MCF 10A (cell line): ENCODE measurements at regions of chr11 and their contacts with region 1.

Region 1: GRCh38 chr11:128522055-128522942 is 65.1 kb downstream of the ETS1 start:
- DNase-seq: peak; percentile 96
- H3K4me3 Mint-ChIP-seq: peak overlapping the region; percentile 78
- H3K27ac Mint-ChIP-seq: peak overlapping the region; percentile 79
- H3K4me1 Mint-ChIP-seq: peaks cover 54% of the 10 kb centered on the region
- H3K27me3 Mint-ChIP-seq: no peaks in the 10 kb centered on the region
- CTCF ChIP-seq: no peak

Region 2: DNA sequence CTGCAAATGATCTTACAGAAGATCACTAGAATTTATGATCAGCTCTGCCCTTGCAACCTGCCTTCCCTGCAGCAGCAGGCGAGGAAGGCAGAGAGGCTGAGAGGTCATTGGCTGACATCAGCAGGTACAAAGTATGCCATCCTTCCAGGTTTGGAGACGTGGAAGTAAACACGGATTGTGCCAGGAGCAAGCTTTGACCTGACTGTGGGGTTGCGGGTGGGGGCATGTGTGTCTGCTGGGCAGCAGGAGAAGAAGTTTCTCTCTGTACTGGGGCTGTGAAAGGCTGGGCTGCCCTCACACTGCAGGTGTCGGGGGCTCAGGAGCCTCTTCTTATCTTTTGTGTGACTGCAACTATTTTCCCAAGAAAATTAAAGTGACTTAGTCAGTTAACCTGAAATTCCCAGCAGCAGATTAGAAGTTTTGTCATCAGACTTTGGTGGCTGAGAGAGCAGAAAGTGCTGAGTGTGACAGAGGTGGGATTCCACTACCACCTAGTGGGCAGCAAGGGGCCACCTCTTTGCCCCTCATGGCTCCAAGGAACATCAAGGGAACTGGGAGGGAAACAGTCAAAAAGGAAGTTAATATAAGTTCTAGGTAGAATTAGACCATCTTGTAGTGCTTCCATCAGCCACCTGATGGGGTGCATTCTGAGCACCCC is 500.8 kb before region 1 on chr11:
- CTCF ChIA-PET with region 1: no interaction called
- POLR2A ChIA-PET with region 1: no interaction called
- intact Hi-C with region 1: loop called (anchors 10 kb)
- DNase-seq: peak; percentile 28
- H3K4me3 Mint-ChIP-seq: no peak overlapping the region
- H3K27ac Mint-ChIP-seq: no peak overlapping the region
- H3K4me1 Mint-ChIP-seq: peaks cover 8% of the 10 kb centered on the region
- H3K27me3 Mint-ChIP-seq: no peaks in the 10 kb centered on the region
- CTCF ChIP-seq: peak; percentile 39

Region 3: GRCh38 chr11:128210148-128210940 is 312.0 kb before region 1 on chr11:
- CTCF ChIA-PET with region 1: no interaction called
- POLR2A ChIA-PET with region 1: interaction called, 13 read pairs
- intact Hi-C with region 1: loop called (anchors 5 kb)
- DNase-seq: peak; percentile 100
- H3K4me3 Mint-ChIP-seq: peak overlapping the region; percentile 43
- H3K27ac Mint-ChIP-seq: peak overlapping the region; percentile 86
- H3K4me1 Mint-ChIP-seq: peaks cover 34% of the 10 kb centered on the region
- H3K27me3 Mint-ChIP-seq: no peaks in the 10 kb centered on the region
- CTCF ChIP-seq: no peak

Region 4: DNA sequence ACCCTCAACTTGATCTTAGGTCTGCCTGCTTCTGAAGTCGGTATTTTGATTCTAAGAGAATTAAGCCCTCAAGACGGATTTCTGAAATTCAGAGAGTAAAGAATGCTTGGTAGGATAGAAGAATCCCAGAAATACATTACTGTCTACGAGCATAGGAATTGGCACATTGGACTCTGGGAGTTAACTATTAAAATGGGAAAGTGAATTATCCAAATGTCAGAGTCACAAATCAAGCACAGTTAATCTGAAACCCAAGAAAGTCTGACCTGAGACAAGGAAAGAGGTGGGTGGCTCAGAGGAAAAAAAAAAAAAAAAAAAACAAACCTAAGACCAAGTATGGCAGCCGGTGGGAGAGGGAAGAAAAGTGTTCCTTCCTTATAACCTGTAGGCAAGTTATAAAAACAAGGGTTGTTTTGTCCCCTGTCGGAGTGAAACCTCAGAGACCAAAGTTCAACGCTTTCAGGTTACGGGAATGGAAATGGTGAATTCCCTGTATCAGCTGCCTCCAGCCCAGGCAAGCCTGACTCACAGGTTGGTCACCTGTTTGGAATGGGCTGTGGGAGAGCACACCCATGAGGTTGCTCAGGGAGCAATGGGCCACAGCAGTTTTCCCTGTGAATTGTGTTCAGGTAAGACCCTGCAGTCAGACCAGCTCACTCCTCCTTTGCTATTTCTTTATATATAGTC is 74.0 kb before region 1 on chr11:
- CTCF ChIA-PET with region 1: interaction called, 3 read pairs
- POLR2A ChIA-PET with region 1: no interaction called
- intact Hi-C with region 1: loop called (anchors 5 kb)
- DNase-seq: peak; percentile 87
- H3K4me3 Mint-ChIP-seq: peak overlapping the region; percentile 61
- H3K27ac Mint-ChIP-seq: peak overlapping the region; percentile 88
- H3K4me1 Mint-ChIP-seq: peaks cover 22% of the 10 kb centered on the region
- H3K27me3 Mint-ChIP-seq: no peaks in the 10 kb centered on the region
- CTCF ChIP-seq: peak; percentile 10

Region 5: DNA sequence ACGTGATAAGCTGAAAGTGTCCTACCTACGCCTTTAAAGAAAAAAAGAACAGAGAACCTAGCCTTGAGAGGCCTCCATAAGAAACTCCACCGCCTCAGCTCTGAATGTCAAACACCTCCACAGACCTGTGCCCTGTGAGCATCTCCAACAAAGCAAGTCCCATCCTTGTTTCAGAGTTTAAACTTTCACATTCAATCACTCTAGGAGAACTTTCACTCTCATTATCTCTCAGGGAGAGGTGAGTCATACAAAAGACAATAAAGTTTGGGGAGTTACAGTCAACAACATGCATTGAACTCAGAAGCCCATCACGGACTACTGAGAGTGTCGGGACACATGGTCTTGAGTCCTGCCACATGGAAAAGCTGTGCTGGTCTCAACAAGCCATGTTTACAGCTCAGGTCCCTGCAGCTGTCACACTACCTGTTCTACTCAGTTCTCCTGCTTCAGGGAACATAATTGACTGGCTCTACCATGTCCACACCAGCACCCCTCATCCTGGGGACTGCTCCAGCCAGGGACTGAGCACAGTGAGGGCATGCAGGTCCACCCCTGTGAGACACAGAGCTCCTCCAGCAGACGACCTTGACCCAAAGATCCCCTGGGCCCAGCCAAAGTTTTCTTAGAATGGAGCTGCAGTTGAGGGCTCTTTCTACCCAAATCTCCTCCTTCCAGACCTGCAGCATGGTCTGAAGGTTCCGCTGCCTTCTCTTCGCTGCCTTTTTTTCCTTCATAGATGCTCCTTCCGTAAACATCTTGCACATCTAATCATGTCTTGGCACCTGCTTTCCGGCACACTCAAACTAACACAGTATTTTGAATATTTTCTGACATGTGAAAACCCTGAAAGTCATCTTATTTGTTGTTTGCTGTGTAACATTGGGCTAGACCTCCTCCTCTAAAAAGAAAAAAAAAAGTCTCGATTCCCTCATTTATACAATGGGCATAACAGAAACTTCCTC is 49.9 kb before region 1 on chr11:
- CTCF ChIA-PET with region 1: no interaction called
- POLR2A ChIA-PET with region 1: no interaction called
- intact Hi-C with region 1: no loop called
- DNase-seq: peak; percentile 46
- H3K4me3 Mint-ChIP-seq: no peak overlapping the region
- H3K27ac Mint-ChIP-seq: no peak overlapping the region
- H3K4me1 Mint-ChIP-seq: peaks cover 41% of the 10 kb centered on the region
- H3K27me3 Mint-ChIP-seq: no peaks in the 10 kb centered on the region
- CTCF ChIP-seq: no peak

Region 6: GRCh38 chr11:128497061-128497775 is 25.1 kb before region 1 on chr11:
- CTCF ChIA-PET with region 1: interaction called, 3 read pairs
- POLR2A ChIA-PET with region 1: interaction called, 124 read pairs
- intact Hi-C with region 1: loop called (anchors 2 kb)
- DNase-seq: peak; percentile 94
- H3K4me3 Mint-ChIP-seq: peak overlapping the region; percentile 75
- H3K27ac Mint-ChIP-seq: peak overlapping the region; percentile 92
- H3K4me1 Mint-ChIP-seq: peaks cover 75% of the 10 kb centered on the region
- H3K27me3 Mint-ChIP-seq: no peaks in the 10 kb centered on the region
- CTCF ChIP-seq: no peak